ENCODE measurements at regions of chr17 and their contacts with region 1.

Region 1: DNA sequence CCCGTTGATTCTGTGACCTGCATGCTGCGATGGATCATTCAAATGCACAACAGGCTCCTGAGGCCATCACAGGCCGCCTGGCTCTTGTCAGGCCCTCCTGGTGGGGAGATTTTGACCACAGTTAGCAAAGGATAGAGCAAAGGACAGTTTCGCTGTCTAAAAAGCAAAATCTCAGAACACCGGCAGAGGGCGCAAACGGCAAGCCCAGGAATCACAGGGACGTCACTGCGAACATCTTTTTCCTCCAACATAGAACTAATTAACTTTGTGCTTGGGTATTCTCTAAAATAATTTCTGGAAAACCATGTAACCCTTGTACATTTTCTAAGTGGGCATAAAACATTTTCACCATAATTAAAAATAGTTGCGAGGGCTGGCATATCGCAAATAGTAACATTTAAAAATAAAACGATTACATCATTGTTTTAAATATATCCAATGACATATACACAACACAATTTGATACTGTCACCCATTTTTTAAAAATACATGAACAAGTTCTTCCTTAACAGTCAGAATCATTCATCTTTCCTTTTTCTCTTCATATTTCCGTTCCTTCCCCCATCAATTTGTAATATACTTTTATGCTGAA is 19.7 kb upstream of the SLC47A1 start:
- DNase-seq: peak in 1 of 2 donors; percentile 86
- H3K4me3 ChIP-seq: no peak overlapping the region
- H3K27ac ChIP-seq: peak overlapping the region; percentile 84 to 88
- H3K4me1 ChIP-seq: peaks cover 3 to 15% of the 10 kb centered on the region in 2 donors
- H3K27me3 ChIP-seq: no peaks in the 10 kb centered on the region
- CTCF ChIP-seq: peak; percentile 92 to 93 (median 92)

Region 2: GRCh38 chr17:19533718-19534561 is 19.9 kb after region 1 on chr17 and contains the start of gene SLC47A1:
- intact Hi-C with region 1: loop called (anchors 2 kb)
- DNase-seq: peak in 1 of 2 donors; percentile 69
- H3K4me3 ChIP-seq: peak within 1 kb of the TSS; percentile 78 to 80
- H3K27ac ChIP-seq: peak within 1 kb of the TSS in 1 of 2 donors; percentile 40
- H3K4me1 ChIP-seq: peaks cover 0 to 7% of the 10 kb centered on the region in 2 donors
- H3K27me3 ChIP-seq: no peaks in the 10 kb centered on the region
- CTCF ChIP-seq: no peak
- total RNA-seq, gene SLC47A1: 0.64 TPM

Region 3: DNA sequence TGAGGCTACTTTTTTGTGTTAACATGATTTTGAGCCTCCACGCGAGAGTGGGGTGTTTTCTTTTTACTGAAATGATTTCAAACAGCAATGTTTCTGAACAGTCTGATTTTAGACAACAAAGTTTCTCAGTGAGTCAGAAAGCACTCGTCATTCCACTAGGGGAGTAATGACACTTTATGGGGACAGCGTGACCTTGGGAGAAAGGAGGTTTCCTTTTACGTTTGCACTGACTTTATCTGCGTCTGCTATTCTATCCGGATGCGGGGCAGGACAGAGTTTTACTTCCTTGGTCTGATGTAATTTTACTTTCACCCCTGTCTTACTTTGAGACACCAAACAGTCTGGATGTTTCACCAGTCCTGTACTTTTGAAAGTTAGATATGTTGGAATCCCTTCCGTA is 40.4 kb after region 1 on chr17:
- intact Hi-C with region 1: loop called (anchors 5 kb)
- DNase-seq: no peak
- H3K4me3 ChIP-seq: no peak overlapping the region
- H3K27ac ChIP-seq: peak overlapping the region; percentile 70 to 71
- H3K4me1 ChIP-seq: peaks cover 8 to 24% of the 10 kb centered on the region in 2 donors
- H3K27me3 ChIP-seq: no peaks in the 10 kb centered on the region
- CTCF ChIP-seq: no peak

Region 4: GRCh38 chr17:19648475-19649406 is 134.7 kb after region 1 on chr17 and contains the start of gene ALDH3A2:
- intact Hi-C with region 1: loop called (anchors 2 kb)
- DNase-seq: peak; percentile 94 to 99
- H3K4me3 ChIP-seq: peak within 1 kb of the TSS; percentile 75 to 85
- H3K27ac ChIP-seq: peak within 1 kb of the TSS; percentile 97 to 99
- H3K4me1 ChIP-seq: peaks cover 11 to 41% of the 10 kb centered on the region in 2 donors
- H3K27me3 ChIP-seq: no peaks in the 10 kb centered on the region
- CTCF ChIP-seq: peak in 2 of 3 experiments; percentile 27 to 28
- total RNA-seq, gene ALDH3A2: 189 TPM

Region 5: DNA sequence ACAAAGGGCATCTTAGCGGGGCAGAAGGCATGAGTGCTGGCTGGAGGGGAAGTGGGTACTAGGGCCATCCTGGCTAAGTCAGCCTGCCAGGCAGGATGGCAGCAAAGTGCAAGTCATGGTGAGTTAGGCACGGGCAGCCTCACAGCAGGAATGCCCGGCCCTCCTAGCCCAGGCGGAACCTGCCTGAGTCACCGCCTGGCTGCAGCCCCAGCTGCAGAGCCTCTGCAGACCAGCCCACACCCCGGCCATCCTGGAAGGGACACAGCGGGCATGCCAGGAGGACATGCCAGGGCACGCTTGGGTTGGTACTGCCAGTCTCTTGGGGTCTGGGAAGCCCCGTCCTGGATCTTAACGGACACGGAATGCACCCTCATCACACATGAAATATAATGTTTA is 239.1 kb after region 1 on chr17:
- intact Hi-C with region 1: loop called (anchors 5 kb)
- DNase-seq: peak; percentile 78 to 95
- H3K4me3 ChIP-seq: no peak overlapping the region
- H3K27ac ChIP-seq: peak overlapping the region; percentile 93 to 99
- H3K4me1 ChIP-seq: peaks cover 10 to 30% of the 10 kb centered on the region in 2 donors
- H3K27me3 ChIP-seq: no peaks in the 10 kb centered on the region
- CTCF ChIP-seq: no peak

Region 6: DNA sequence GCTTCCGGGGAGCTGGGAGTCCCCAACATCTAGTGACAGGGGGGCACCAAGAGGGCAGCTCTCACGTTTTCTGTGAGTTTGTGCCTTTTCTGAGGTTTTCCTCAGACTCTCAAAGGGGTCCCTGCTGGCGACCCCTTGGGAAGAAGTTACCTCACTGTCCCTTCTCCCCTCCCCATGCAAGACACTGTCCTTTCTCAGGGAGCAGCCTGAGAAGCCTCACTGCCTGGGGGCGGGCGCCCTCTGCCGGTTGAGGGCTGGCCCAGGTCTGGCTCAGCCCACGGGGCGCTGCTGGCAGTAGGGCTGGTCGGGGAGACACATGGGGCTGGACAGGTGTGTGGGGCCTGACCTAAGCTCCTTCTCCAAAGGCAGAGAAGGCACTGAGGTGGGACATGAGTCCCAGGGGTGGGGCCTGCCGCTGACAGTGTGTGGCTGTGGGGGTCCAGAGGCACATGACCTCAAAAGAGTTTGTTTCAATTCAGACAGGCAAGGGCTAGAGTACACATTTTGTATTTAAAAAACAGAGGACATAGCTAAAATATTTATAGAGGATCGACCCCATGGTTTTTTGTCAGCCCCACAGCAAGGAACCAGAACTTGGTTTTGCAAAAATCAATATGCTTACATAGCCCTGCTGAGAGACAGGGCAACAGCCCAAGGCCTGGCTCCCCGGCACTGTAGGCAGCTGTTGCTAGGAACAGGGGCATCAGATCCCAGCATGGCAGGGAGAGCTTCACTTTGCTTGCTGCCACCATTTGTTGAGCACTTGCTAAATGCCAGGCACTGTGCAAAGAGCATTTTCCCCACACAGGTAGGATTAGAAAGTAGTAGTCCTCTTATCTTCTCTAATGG is 252.7 kb after region 1 on chr17:
- intact Hi-C with region 1: loop called (anchors 1 kb)
- DNase-seq: peak in 1 of 2 donors; percentile 86
- H3K4me3 ChIP-seq: no peak overlapping the region
- H3K27ac ChIP-seq: no peak overlapping the region
- H3K4me1 ChIP-seq: peaks cover 0 to 5% of the 10 kb centered on the region in 2 donors
- H3K27me3 ChIP-seq: no peaks in the 10 kb centered on the region
- CTCF ChIP-seq: peak; percentile 94 to 99 (median 97)

Measured in ascending aorta (tissue), 2 donors.